CD14-positive monocyte (primary cell): ENCODE measurements at regions of chr1 and their contacts with region 1.

Region 1: GRCh38 chr1:228734881-228735801 is at the start of gene RHOU:
- DNase-seq: peak; percentile 67 to 78 (median 69)
- H3K4me3 ChIP-seq: peak within 1 kb of the TSS; percentile 62 to 93 (median 62)
- H3K4me3 Mint-ChIP-seq: peak within 1 kb of the TSS; percentile 98 to 99
- H3K27ac ChIP-seq: peak within 1 kb of the TSS; percentile 25 to 87
- H3K27ac Mint-ChIP-seq: peak within 1 kb of the TSS in 6 of 7 donors; percentile 60 to 93 (median 92)
- H3K4me1 ChIP-seq: peaks cover 36 to 39% of the 10 kb centered on the region in 2 donors
- H3K4me1 Mint-ChIP-seq: peaks cover 42% of the 10 kb centered on the region
- H3K27me3 ChIP-seq: no peaks in the 10 kb centered on the region
- H3K27me3 Mint-ChIP-seq: peaks cover 2 to 6% (median 3%) of the 10 kb centered on the region in 3 donors
- CTCF ChIP-seq: peak; percentile 98
- polyA plus RNA-seq, gene RHOU: 4.1 to 11.6 (median 4.8) TPM

Region 2: GRCh38 chr1:228765168-228765946 is 30.2 kb after region 1 on chr1:
- intact Hi-C with region 1: no loop called
- DNase-seq: no peak
- H3K4me3 ChIP-seq: no peak overlapping the region
- H3K4me3 Mint-ChIP-seq: no peak overlapping the region
- H3K27ac ChIP-seq: no peak overlapping the region
- H3K27ac Mint-ChIP-seq: peak overlapping the region in 1 of 7 donors; percentile 24
- H3K4me1 ChIP-seq: peaks cover 5 to 8% of the 10 kb centered on the region in 2 donors
- H3K4me1 Mint-ChIP-seq: peaks cover 5% of the 10 kb centered on the region
- H3K27me3 ChIP-seq: no peaks in the 10 kb centered on the region
- H3K27me3 Mint-ChIP-seq: peaks cover 2 to 4% (median 3%) of the 10 kb centered on the region in 3 donors
- CTCF ChIP-seq: no peak

Region 3: GRCh38 chr1:228938537-228938901 is 203.4 kb after region 1 on chr1:
- intact Hi-C with region 1: loop called in 1 of 2 experiments (anchors 10 kb)
- DNase-seq: peak in 2 of 3 donors; percentile 43 to 55
- H3K4me3 ChIP-seq: peak overlapping the region in 1 of 3 experiments; percentile 38
- H3K4me3 Mint-ChIP-seq: peak overlapping the region; percentile 52 to 78
- H3K27ac ChIP-seq: peak overlapping the region; percentile 61 to 77
- H3K27ac Mint-ChIP-seq: peak overlapping the region; percentile 78 to 92 (median 87)
- H3K4me1 ChIP-seq: peaks cover 76 to 81% of the 10 kb centered on the region in 2 donors
- H3K4me1 Mint-ChIP-seq: peaks cover 84% of the 10 kb centered on the region
- H3K27me3 ChIP-seq: no peaks in the 10 kb centered on the region
- H3K27me3 Mint-ChIP-seq: peaks cover 0 to 5% (median 1%) of the 10 kb centered on the region in 3 donors
- CTCF ChIP-seq: no peak

Region 4: GRCh38 chr1:229227298-229227919 is 492.3 kb after region 1 on chr1:
- intact Hi-C with region 1: loop called (anchors 1 to 5 kb)
- DNase-seq: peak; percentile 68 to 79 (median 78)
- H3K4me3 ChIP-seq: no peak overlapping the region
- H3K4me3 Mint-ChIP-seq: no peak overlapping the region
- H3K27ac ChIP-seq: no peak overlapping the region
- H3K27ac Mint-ChIP-seq: peak overlapping the region in 2 of 7 donors; percentile 3 to 21
- H3K4me1 ChIP-seq: peaks cover 24 to 30% of the 10 kb centered on the region in 2 donors
- H3K4me1 Mint-ChIP-seq: peaks cover 35% of the 10 kb centered on the region
- H3K27me3 ChIP-seq: no peaks in the 10 kb centered on the region
- H3K27me3 Mint-ChIP-seq: peaks cover 0 to 10% (median 3%) of the 10 kb centered on the region in 3 donors
- CTCF ChIP-seq: peak; percentile 94